ENCODE measurements at regions of chr5 and their contacts with region 1.

Region 1: GRCh38 chr5:43227655-43228054 is 35.6 kb downstream of the NIM1K start:
- DNase-seq: no peak
- ATAC-seq: no peak

Region 2: GRCh38 chr5:42819745-42820144 is 407.9 kb before region 1 on chr5:
- intact Hi-C with region 1: no loop called
- DNase-seq: no peak
- ATAC-seq: no peak

Region 3: DNA sequence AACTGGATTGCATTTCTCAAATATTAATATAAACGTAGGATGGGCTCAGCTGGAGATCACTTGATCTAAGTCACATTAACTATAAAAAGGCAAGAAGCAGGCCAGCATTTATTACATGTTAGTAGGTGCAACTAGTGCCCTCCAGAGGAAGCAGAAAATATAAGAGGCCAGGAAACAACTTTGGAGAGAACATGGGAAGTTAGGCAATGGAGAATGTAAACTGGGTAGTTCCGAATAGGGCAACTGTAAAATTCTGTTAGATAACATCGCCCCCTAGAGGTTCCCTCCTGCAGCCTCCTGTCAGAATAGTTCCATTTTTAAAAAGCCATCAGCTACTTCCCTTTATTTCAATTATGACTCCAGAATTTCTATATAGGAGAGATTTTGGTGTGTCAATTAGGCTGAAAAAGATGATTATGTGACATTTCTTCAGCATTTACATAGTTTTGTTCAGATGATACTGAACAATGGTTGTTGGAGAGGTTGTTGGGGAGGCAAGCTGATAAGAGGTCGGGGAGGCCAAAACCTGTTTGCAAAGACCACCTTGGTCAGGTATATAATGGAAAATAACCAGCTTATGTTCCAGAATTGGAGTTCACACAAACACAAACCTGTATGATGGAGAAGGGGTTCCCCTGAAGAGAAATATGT is 162.1 kb after region 1 on chr5:
- intact Hi-C with region 1: loop called (anchors 10 kb)
- DNase-seq: peak; percentile 32
- ATAC-seq: peak; percentile 95 to 96

Measured in left cardiac atrium (tissue), 4 donors.